ENCODE measurements at regions of chr11 and their contacts with region 1.

Region 1: GRCh38 chr11:50394017-50394416 is 361.3 kb downstream of the OR4C45 start:
- DNase-seq: no peak
- H3K4me3 ChIP-seq: no peak overlapping the region
- H3K27ac ChIP-seq: no peak overlapping the region
- H3K4me1 ChIP-seq: no peaks in the 10 kb centered on the region
- H3K27me3 ChIP-seq: no peaks in the 10 kb centered on the region
- CTCF ChIP-seq: no peak
- POLR2A ChIP-seq: no peak

Region 2: DNA sequence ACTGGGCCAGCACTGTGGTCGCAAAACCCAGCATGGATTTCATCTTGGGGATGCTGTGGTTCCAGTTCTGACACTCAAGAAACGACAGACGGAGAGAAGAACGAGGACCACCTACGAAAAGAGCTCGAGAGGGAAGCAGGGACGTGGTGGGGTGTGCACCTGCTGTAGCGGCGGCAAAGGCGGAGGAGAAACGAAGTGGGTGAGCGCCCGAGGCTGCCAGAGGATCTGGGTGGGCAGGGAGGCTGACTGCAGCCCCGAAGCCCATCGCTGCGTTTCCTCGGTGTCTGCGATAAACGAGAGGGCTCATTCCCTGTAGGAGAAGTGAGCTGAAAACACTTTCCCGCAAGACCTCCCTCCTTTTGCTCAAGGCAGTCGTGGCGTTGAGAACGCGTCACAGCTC is 115.3 kb before region 1 on chr11:
- intact Hi-C with region 1: no loop called
- DNase-seq: no peak
- H3K4me3 ChIP-seq: no peak overlapping the region
- H3K27ac ChIP-seq: no peak overlapping the region
- H3K4me1 ChIP-seq: no peaks in the 10 kb centered on the region
- H3K27me3 ChIP-seq: no peaks in the 10 kb centered on the region
- CTCF ChIP-seq: no peak
- POLR2A ChIP-seq: no peak

Region 3: DNA sequence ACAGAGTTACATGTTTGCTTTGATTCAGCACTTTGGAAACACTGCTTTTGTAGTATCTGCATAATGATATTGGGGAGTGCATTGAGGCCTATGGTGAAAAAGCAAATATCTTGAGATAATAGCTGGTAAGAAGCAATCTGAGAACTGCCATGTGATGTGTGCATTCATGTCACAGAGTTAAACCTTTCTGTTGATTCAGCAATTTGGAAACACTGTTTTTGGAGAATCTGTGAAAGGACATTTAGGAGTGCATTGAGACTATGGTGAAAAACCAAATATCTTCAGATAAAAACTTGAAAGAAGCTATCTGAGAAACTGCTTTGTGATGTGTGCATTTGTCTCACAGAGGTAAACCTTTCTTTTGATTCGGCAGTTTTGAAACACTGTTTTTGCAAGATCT is 14.5 kb before region 1 on chr11:
- intact Hi-C with region 1: loop called (anchors 2 kb)
- DNase-seq: no peak
- H3K4me3 ChIP-seq: no peak overlapping the region
- H3K27ac ChIP-seq: no peak overlapping the region
- H3K4me1 ChIP-seq: no peaks in the 10 kb centered on the region
- H3K27me3 ChIP-seq: no peaks in the 10 kb centered on the region
- CTCF ChIP-seq: no peak
- POLR2A ChIP-seq: no peak